ENCODE measurements at regions of chr12 and their contacts with region 1.

Region 1: DNA sequence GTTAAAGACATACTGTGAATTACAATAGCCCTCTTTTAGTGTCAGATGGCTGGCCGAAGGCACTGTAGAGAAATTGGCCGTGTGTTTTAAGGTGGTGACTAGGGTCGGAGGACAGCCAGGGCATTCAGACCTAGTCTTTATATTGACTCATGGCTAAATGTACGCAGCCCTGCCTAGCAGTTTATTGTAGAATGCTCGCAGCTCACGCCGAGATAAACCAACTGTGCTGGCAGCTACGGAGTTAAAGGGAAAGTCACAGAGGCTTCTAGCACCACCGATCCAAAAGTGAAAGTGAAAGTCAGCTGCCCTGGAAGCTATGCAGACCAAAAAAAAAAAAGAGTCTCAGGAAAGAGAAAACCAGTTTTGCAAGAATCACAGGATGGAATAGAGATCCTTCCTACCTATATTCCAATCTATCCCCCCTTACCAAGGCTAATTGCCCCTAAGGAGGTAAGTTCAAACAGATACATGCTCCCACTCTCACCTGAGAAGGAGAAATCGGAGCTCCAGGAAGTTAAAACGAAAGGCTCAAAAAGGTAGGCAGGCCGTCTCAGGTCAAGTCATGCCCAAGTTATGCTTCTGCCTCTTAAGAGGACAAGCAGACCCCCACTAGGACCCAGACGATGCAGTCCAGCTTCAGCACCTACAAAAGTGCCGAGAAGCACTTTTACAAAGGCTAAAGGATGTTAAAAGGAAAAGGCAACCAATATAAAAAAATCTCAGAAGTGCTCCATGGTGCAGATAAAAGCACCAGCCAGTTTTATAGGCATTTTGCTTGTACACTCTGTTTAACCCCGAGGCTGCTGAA is 24.8 kb downstream of the KLRK1 start:
- DNase-seq: peak; percentile 84
- ATAC-seq: peak; percentile 58
- H3K4me3 ChIP-seq: peak overlapping the region; percentile 54
- H3K27ac ChIP-seq: peak overlapping the region; percentile 92
- H3K4me1 ChIP-seq: peaks cover 22% of the 10 kb centered on the region
- H3K27me3 ChIP-seq: no peaks in the 10 kb centered on the region
- CTCF ChIP-seq: no peak
- POLR2A ChIP-seq: no peak
- RAD21 ChIP-seq: no peak; the same call in 1 of the 2 replicates

Region 2: GRCh38 chr12:10716704-10717315 is 351.8 kb after region 1 on chr12:
- CTCF ChIA-PET with region 1: interaction called, 3 read pairs
- POLR2A ChIA-PET with region 1: no interaction called
- dilution Hi-C with region 1: no loop called
- in situ Hi-C with region 1: no loop called
- intact Hi-C with region 1: loop called (anchors 2 kb)
- DNase-seq: peak; percentile 92
- ATAC-seq: peak; percentile 76
- H3K4me3 ChIP-seq: peak overlapping the region; percentile 22; the same call in 1 of the 2 replicates
- H3K27ac ChIP-seq: peak overlapping the region; percentile 64; the same call in 1 of the 2 replicates
- H3K4me1 ChIP-seq: peaks cover 5% of the 10 kb centered on the region; the same call in 1 of the 2 replicates
- H3K27me3 ChIP-seq: no peaks in the 10 kb centered on the region
- CTCF ChIP-seq: no peak
- POLR2A ChIP-seq: peak; percentile 22; the same call in 1 of the 2 replicates
- RAD21 ChIP-seq: peak; percentile 9; the same call in 1 of the 2 replicates